ENCODE measurements at regions of chr20 and their contacts with region 1.

Region 1: DNA sequence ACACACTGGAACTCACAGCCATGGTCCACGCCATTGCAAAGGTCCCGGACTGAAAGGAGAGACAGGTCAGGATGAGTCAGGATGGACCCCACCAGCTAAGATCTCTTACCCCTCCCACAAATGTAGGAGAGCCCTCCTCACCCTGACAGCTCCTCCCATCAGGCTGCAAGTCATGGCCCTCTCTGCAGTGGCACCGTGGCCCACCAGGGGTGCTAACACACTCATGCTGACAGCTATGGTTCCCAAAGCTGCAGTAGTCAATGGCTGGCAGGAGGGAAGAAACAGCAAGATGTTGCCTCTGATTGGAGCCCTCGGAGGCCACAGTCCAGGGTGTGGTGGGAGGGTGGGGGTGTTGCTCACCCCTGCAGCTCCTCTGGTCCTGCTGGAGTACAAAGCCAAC is 5.7 kb upstream of the RBPJL start:
- DNase-seq: peak; percentile 59
- ATAC-seq: peak; percentile 91
- H3K4me3 Mint-ChIP-seq: no peak overlapping the region
- H3K27ac Mint-ChIP-seq: no peak overlapping the region
- H3K4me1 Mint-ChIP-seq: peaks cover 18% of the 10 kb centered on the region
- H3K27me3 Mint-ChIP-seq: peaks cover 17% of the 10 kb centered on the region

Region 2: GRCh38 chr20:45251884-45252560 is 48.9 kb before region 1 on chr20:
- CTCF ChIA-PET with region 1: no interaction called
- POLR2A ChIA-PET with region 1: no interaction called
- DNase-seq: no peak
- ATAC-seq: no peak
- H3K4me3 Mint-ChIP-seq: no peak overlapping the region
- H3K27ac Mint-ChIP-seq: no peak overlapping the region
- H3K4me1 Mint-ChIP-seq: no peaks in the 10 kb centered on the region
- H3K27me3 Mint-ChIP-seq: peaks cover 43% of the 10 kb centered on the region

Region 3: DNA sequence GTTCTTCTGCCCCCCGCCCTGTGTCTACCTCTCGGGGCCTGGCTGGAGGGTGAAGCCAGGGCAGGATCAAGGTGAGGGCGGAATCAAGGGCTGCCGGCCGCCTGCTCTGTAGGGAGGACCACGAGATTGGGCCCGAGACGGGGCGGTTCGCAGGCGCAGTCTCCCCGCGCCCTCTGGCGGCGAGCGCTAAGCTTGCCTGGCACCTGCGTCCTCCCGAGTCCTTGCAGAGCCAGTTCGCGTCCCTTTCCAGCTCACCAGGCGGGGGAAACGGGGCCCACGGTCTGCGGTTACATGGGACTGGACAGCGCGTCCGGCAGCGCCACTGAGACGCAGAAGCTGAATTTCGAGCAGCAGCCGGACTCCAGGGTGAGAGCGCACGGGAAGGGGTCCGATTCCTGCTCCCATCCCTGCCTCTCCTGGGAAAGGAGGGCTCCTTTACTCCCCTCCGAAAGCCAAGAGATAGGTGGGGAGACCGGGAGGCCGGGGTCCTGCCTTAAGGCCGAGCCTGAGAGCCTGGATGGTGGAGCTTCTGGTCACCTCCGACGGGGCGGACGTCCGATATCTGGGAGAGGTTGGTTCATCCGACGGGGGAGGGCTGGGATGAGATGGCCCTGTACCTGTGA is 10.7 kb after region 1 on chr20:
- CTCF ChIA-PET with region 1: interaction called, 28 read pairs
- POLR2A ChIA-PET with region 1: no interaction called
- DNase-seq: peak; percentile 70
- ATAC-seq: peak; percentile 82
- H3K4me3 Mint-ChIP-seq: no peak overlapping the region
- H3K27ac Mint-ChIP-seq: no peak overlapping the region
- H3K4me1 Mint-ChIP-seq: peaks cover 9% of the 10 kb centered on the region
- H3K27me3 Mint-ChIP-seq: peaks cover 38% of the 10 kb centered on the region

Region 4: DNA sequence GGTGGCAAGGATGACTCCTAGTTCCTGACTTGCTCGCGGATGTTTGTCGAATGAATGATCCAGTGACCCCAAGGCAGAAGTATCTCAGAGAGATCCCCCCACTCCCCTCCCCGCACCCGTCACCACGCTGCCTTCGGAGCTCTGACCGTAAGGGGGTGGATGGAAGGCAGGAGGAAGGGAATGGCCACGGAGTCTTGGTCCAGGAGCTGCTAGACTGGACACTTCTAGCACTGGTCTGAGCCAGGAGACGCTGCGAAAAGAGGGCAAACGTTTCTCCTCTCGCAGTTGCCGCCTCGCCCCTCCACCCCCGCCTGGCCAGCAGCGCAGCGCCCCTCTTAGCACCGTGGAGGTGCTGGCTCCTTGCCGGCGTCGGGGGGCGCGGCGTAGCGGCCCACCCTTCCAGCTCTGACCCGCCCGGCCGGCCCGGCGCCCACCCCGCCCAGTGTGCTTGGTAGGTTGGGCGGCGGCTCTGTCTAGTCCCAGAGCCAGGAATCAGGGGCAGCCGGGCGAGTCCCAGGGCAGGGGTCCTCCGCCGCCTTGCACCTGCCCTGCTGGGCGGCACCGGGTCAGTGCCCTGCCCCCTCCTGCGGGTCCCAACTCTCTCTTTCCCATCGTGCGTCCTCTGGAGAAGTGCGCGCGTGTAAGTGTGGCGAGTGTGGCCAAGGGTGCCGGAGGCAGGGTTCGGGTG is 104.8 kb after region 1 on chr20:
- CTCF ChIA-PET with region 1: no interaction called
- POLR2A ChIA-PET with region 1: no interaction called
- DNase-seq: no peak
- ATAC-seq: peak; percentile 52
- H3K4me3 Mint-ChIP-seq: peak overlapping the region; percentile 73
- H3K27ac Mint-ChIP-seq: no peak overlapping the region
- H3K4me1 Mint-ChIP-seq: peaks cover 16% of the 10 kb centered on the region
- H3K27me3 Mint-ChIP-seq: peaks cover 15% of the 10 kb centered on the region

Region 5: DNA sequence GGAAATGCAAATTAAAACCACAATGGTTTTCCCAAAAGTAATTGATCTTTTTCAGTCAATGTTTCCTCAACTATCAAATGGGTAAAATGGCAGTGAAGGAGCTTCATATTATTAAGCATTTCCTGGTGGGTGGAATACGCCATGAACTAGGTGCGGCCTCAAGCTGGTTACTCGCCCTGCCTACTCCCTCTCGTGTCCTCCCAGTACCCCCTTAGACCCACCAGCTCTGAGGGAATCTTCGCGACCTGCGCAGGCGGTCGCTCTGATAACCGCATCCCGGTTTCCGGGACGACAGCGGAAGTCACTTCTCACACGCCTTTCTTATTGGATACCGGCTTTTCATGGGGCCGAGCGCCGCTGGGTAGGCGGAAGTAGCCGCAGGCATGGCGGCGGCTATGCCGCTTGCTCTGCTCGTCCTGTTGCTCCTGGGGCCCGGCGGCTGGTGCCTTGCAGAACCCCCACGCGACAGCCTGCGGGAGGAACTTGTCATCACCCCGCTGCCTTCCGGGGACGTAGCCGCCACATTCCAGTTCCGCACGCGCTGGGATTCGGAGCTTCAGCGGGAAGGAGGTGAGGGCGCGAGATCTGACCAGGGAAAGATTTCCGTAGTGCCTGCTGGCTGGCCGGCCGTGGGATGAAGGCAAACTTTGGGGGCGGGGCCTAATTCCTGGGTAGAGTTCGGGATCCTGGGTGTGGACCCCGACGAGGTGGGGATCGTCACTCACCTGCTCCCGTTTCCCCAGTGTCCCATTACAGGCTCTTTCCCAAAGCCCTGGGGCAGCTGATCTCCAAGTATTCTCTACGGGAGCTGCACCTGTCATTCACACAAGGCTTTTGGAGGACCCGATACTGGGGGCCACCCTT is 115.0 kb after region 1 on chr20 and contains the start of gene PIGT:
- CTCF ChIA-PET with region 1: no interaction called
- POLR2A ChIA-PET with region 1: no interaction called
- DNase-seq: peak; percentile 92
- ATAC-seq: peak; percentile 97
- H3K4me3 Mint-ChIP-seq: peak within 1 kb of the TSS; percentile 93
- H3K27ac Mint-ChIP-seq: peak within 1 kb of the TSS; percentile 90
- H3K4me1 Mint-ChIP-seq: peaks cover 42% of the 10 kb centered on the region
- H3K27me3 Mint-ChIP-seq: peaks cover 2% of the 10 kb centered on the region
- total RNA-seq, gene PIGT: 59.6 to 62.4 TPM